ENCODE measurements at regions of chr3 and their contacts with region 1.

Region 1: GRCh38 chr3:51498876-51499738 is 708 bp downstream of the DCAF1 start:
- DNase-seq: peak; percentile 97
- ATAC-seq: peak; percentile 92
- H3K4me3 ChIP-seq: peak overlapping the region; percentile 88 to 92
- H3K27ac ChIP-seq: peak overlapping the region; percentile 84 to 90
- H3K4me1 ChIP-seq: no peaks in the 10 kb centered on the region
- H3K27me3 ChIP-seq: no peaks in the 10 kb centered on the region

Region 2: GRCh38 chr3:51670823-51671733 is 172.0 kb after region 1 on chr3 and contains the start of gene TEX264:
- intact Hi-C with region 1: loop called (anchors 1 to 2 kb)
- DNase-seq: peak; percentile 95 to 97
- ATAC-seq: peak; percentile 94
- H3K4me3 ChIP-seq: peak within 1 kb of the TSS; percentile 66 to 82
- H3K27ac ChIP-seq: peak within 1 kb of the TSS in 1 of 2 donors; percentile 73
- H3K4me1 ChIP-seq: no peaks in the 10 kb centered on the region
- H3K27me3 ChIP-seq: no peaks in the 10 kb centered on the region
- total RNA-seq, gene TEX264: 18.2 to 26.0 TPM

Region 3: DNA sequence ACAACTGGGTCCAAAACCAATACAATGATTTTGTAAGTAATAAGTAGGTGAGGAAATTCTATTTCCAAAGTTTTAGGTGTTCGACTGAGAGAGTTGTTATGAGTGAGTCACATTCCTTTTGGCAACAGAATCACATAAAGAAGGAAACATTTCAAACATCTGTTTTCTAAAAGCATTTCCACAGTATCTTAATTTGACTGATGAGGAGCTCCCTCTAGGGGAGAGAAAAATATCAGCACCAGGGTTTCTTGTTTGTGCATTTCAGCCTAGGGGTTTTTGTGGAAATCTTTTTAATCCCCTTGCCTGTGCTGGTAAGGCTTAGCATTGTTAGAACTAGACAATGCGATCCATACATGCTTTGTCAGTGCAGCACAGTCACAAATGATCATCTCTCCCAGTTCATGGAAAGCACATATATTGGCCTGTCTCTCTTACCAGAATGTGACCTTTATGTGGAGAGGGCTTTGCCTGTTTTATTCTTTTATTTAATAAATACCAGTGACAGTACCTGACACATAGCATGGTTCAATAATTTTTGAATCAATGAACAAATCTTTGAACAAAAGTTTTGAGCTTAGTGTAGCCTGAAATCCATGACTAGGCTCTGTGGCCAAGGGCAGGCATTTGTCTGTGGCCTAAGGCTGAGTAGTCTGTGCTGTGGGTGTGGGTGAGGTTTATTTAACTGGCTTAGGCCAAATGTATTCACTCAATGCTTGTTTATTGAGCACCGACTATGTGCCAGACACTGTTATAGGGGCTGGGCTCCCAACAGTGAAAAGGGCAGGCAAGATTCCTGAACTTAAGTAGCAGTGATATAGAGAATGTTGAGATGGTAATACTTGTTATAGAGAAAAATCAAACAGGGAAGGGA is 301.0 kb after region 1 on chr3:
- intact Hi-C with region 1: loop called (anchors 2 to 5 kb)
- DNase-seq: no peak
- ATAC-seq: peak; percentile 69
- H3K4me3 ChIP-seq: no peak overlapping the region
- H3K27ac ChIP-seq: no peak overlapping the region
- H3K4me1 ChIP-seq: no peaks in the 10 kb centered on the region
- H3K27me3 ChIP-seq: peaks cover 0 to 3% of the 10 kb centered on the region in 2 donors